ENCODE measurements at regions of chr7 and their contacts with region 1.

Region 1: GRCh38 chr7:107150375-107151073 is 18.3 kb upstream of the HBP1 start:
- DNase-seq: peak; percentile 91
- H3K4me3 Mint-ChIP-seq: no peak overlapping the region
- H3K27ac Mint-ChIP-seq: no peak overlapping the region
- H3K4me1 Mint-ChIP-seq: peaks cover 5% of the 10 kb centered on the region
- H3K27me3 Mint-ChIP-seq: peaks cover 7% of the 10 kb centered on the region

Region 2: GRCh38 chr7:106947244-106947728 is 203.2 kb before region 1 on chr7:
- intact Hi-C with region 1: loop called (anchors 1 kb)
- DNase-seq: peak; percentile 70
- H3K4me3 Mint-ChIP-seq: no peak overlapping the region
- H3K27ac Mint-ChIP-seq: no peak overlapping the region
- H3K4me1 Mint-ChIP-seq: no peaks in the 10 kb centered on the region
- H3K27me3 Mint-ChIP-seq: peaks cover 15% of the 10 kb centered on the region

Region 3: DNA sequence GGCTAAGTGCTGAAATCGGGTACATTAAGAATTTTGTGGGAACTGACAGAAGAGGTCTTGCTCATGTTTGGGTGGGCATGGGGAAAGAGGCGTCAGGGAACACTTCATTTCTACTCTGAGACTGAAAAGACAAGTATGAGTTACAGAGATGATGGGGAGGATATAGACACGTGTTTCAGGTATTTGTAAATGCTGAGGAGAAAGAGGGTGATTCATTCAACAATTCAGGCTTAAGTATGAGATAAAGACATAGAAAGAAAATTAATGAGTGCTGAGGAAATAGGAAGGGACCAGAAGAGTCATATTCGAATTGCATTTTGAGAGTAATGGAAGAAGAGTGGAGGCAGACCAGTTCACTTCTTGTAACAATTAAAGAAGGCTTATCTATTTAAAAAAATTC is 161.9 kb after region 1 on chr7:
- intact Hi-C with region 1: no loop called
- DNase-seq: no peak
- H3K4me3 Mint-ChIP-seq: no peak overlapping the region
- H3K27ac Mint-ChIP-seq: no peak overlapping the region
- H3K4me1 Mint-ChIP-seq: no peaks in the 10 kb centered on the region
- H3K27me3 Mint-ChIP-seq: no peaks in the 10 kb centered on the region